Activated CD4-positive, alpha-beta memory T cell treated with anti-CD3 and anti-CD28 coated beads for 36 hours (primary cell): ENCODE measurements at regions of chr5 and their contacts with region 1.

Region 1: DNA sequence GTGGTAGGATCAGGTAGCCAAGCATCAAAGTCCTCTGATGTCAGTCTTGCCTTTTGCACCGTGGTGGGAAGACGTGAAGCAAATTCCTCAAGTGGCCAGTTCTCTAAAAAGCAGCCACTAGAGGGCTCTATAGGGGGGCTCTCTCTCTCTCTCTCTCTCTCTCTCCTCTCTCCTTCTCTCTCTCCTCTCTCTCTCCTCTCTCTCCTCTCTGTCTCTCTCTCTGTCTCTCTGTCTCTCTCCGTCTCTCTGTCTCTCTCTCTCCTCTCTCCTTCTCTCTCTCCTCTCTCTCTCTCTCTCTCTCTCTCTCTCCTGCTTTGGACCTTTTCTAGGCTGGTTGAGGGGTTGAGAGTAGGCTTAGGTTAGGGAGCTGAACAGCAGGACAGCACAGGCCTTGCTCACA is 13.9 kb upstream of the OSMR start:
- DNase-seq: no peak
- H3K4me3 Mint-ChIP-seq: no peak overlapping the region
- H3K27ac Mint-ChIP-seq: no peak overlapping the region
- H3K4me1 Mint-ChIP-seq: no peaks in the 10 kb centered on the region
- H3K27me3 Mint-ChIP-seq: peaks cover 13% of the 10 kb centered on the region

Region 2: GRCh38 chr5:38563624-38564023 is 268.3 kb before region 1 on chr5:
- CTCF ChIA-PET with region 1: no interaction called
- POLR2A ChIA-PET with region 1: no interaction called
- intact Hi-C with region 1: no loop called
- DNase-seq: no peak
- H3K4me3 Mint-ChIP-seq: no peak overlapping the region
- H3K27ac Mint-ChIP-seq: no peak overlapping the region
- H3K4me1 Mint-ChIP-seq: no peaks in the 10 kb centered on the region
- H3K27me3 Mint-ChIP-seq: peaks cover 26% of the 10 kb centered on the region

Region 3: DNA sequence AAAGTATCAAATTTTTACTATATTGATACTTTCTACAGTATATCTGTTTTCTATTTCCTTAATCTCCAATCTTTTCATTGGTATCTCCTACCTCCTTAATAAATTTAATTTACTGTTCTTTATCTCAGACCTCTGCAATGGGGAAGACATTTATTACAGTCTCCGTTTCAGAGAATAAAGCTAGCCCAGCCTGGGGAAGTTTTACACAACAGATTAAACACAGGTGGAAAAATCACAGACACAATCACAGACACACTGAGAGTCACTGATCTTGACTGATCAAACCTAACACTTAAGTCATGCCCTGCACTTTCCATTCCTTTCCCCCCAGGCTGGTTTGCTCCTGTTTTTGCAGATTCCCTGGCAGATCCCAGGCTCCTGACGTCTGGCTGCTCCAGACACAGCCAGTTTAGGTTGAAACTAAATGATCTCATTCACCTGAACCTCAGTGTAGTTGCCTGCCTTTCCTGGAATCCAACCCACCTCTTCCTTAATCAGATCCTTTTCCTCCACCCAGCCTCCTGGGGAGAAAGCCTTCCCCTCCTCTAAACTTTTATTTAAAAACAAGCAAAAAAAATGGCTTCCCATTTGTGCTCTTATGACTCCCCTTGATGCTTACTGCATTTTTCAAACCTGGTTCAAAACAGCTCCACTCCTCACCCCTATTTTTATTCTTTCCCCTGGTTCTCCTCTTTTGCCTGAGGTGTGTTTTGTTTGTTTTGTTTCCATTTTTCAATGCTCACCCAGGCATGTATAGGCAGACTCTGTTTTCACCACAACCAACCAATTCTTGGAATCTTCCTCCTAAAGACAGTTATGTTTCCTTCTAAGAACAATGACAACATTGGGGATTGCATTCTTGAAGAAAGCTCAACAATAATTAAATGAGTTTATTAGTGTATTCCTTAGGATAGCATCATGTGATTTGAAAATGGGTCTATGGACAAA is 15.6 kb before region 1 on chr5:
- CTCF ChIA-PET with region 1: no interaction called
- POLR2A ChIA-PET with region 1: no interaction called
- intact Hi-C with region 1: no loop called
- DNase-seq: no peak
- H3K4me3 Mint-ChIP-seq: no peak overlapping the region
- H3K27ac Mint-ChIP-seq: no peak overlapping the region
- H3K4me1 Mint-ChIP-seq: no peaks in the 10 kb centered on the region
- H3K27me3 Mint-ChIP-seq: peaks cover 34% of the 10 kb centered on the region

Region 4: GRCh38 chr5:38922199-38922598 is 90.3 kb after region 1 on chr5:
- CTCF ChIA-PET with region 1: interaction called, 8 read pairs
- POLR2A ChIA-PET with region 1: no interaction called
- intact Hi-C with region 1: loop called (anchors 1 kb)
- DNase-seq: peak; percentile 72
- H3K4me3 Mint-ChIP-seq: no peak overlapping the region
- H3K27ac Mint-ChIP-seq: no peak overlapping the region
- H3K4me1 Mint-ChIP-seq: no peaks in the 10 kb centered on the region
- H3K27me3 Mint-ChIP-seq: peaks cover 17% of the 10 kb centered on the region